Right ventricle myocardium superior (tissue), 1 donor: ENCODE measurements at regions of chr22 and their contacts with region 1.

Region 1: GRCh38 chr22:41940832-41941765 is 5.9 kb downstream of the CENPM start:
- DNase-seq: peak; percentile 90
- ATAC-seq: peak; percentile 88

Region 2: GRCh38 chr22:41603873-41604332 is 337.2 kb before region 1 on chr22:
- intact Hi-C with region 1: no loop called
- DNase-seq: peak; percentile 5
- ATAC-seq: no peak

Region 3: GRCh38 chr22:41697126-41697775 is 243.8 kb before region 1 on chr22:
- intact Hi-C with region 1: loop called (anchors 5 kb)
- DNase-seq: peak; percentile 97
- ATAC-seq: peak; percentile 89

Region 4: DNA sequence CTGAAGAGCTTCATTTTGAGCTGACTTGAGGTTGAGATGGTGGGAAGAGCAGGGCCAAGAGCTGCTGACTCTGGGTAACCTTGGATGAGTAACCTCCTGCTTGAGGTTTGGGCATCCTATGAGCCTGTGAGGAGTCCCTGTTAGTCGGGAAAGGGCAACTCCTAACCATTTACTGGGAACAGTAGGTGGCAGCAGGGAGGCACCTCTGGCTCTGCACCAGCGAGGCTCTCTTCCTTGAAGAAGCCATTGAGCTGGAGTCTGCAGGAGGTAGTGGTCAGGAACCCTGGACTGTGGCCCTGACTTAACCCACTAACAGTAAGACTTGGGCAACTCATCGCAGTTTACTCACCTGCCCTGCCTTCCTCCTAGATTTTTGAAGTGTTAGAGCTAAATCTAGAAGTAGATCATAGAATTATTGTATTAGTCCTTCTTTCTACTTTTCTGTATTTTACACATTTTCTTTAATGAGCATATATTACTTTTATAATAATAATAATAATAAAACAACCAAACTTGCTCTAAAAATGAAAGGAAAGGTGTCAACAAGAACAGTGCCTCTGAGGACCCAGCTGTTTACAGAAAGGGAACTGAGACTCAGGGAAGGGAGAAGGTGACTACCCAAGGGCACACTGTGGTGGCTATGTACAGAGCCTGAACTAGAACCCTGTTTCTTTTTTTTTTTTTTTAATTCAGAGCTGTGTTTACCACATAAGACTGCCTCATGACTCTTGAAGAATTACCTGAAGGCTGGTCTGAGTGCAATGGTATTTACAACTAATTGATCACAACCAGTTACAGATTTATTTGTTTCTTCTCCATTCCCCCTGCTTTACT is 194.3 kb before region 1 on chr22:
- intact Hi-C with region 1: loop called (anchors 2 kb)
- DNase-seq: peak; percentile 75
- ATAC-seq: peak; percentile 92

Region 5: GRCh38 chr22:41822317-41823060 is 118.6 kb before region 1 on chr22:
- intact Hi-C with region 1: loop called (anchors 1 kb)
- DNase-seq: no peak
- ATAC-seq: peak; percentile 36

Region 6: GRCh38 chr22:41919357-41920224 is 21.5 kb before region 1 on chr22:
- intact Hi-C with region 1: no loop called
- DNase-seq: peak; percentile 78
- ATAC-seq: peak; percentile 72

Region 7: DNA sequence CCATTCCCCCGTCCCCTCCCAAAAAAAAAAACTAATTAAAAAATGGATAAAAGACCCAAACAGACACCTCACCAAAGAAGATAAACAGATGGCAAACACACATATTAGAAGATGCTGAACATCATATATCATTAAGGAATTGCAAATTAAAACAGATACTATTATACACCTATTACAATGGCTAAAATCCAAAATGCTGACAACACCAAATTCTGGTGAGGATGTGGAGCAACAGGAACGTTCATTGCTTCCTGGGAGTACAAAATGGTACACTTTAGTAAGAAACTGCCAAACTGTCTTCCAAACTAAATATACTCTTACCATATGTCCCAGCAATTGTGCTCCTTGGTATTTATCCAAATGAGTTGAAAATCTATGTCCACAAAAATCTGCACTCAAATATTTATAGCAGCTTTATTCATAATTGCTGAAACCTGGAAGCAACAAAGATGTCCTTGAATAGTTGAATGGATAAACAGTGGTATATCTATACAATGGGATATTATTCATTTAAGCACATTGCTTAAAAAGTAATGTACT is 109.6 kb after region 1 on chr22:
- intact Hi-C with region 1: no loop called
- DNase-seq: no peak
- ATAC-seq: no peak

Region 8: GRCh38 chr22:42169055-42169469 is 228.0 kb after region 1 on chr22:
- intact Hi-C with region 1: no loop called
- DNase-seq: peak; percentile 70
- ATAC-seq: peak; percentile 83